Naive thymus-derived CD4-positive, alpha-beta T cell (primary cell): ENCODE measurements at regions of chr17 and their contacts with region 1.

Region 1: DNA sequence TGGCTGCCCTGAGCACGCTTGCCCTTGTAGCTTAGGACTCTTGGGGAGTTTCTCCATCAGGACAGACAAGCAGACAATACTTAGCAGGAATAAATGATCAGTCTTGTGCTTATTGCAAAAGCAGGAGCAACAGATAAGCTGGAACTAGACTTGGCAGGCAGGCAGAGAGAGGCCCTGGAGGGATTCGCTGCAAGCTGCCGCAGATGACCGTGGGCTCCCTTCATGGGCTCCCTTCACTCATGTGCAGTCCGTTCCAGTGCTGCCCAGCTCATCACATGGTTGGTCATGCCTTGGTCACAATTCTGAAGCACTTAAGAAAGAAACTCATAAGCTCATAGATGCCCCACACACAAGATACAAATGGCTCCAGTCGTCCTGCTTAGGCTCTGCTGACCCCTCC is 2.4 kb upstream of the SLC5A10 start:
- DNase-seq: no peak
- ATAC-seq: no peak
- H3K4me3 ChIP-seq: no peak overlapping the region
- H3K4me3 Mint-ChIP-seq: no peak overlapping the region
- H3K27ac ChIP-seq: no peak overlapping the region
- H3K27ac Mint-ChIP-seq: no peak overlapping the region
- H3K4me1 ChIP-seq: peaks cover 6 to 13% of the 10 kb centered on the region in 2 donors
- H3K4me1 Mint-ChIP-seq: peaks cover 9 to 51% (median 22%) of the 10 kb centered on the region in 7 donors
- H3K27me3 ChIP-seq: no peaks in the 10 kb centered on the region
- H3K27me3 Mint-ChIP-seq: peaks cover 0 to 27% (median 0%) of the 10 kb centered on the region in 5 donors

Region 2: DNA sequence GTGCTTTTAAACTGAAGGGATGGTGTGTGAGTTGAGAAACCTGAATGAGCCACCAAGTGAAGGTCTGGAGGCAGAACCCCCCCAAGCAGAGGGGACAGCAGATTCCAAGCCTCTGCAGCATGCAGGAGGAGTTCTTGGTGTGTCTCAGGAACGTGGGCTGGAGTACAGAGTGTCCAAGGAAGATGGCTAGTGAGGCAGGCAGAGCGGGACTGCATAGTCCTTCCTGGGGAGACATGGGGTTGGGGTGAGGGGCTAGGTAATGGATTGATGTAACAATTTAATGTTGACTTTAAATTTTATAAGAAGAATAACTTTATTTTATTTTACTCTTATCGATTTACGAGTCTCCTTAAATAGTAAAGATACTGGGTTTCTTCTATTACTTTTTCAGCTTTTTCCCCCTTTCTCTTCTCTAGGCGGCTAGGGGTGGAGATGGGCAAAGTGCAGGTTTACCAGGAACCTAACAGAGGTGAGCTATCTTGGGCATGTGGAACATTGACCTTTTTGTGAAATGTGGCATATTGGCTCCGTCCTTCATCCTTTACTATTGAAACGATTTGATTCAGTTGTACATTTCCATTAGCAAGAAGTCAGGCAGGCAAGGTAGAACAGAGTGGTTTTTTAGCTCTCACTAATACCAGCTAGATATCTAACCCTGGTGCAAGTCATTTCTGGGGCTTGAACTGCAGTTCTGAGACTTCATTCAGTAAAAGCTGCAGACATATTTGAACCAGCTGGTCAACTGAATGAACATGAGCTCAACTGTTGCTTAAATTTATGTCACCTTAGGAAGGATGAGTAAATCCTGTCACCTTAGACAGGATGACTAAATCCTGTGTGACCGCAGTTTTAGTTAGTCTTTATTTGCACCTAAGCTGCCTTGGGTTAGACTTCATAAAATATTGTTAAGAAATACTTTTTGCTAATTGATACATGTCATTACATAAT is 82.4 kb before region 1 on chr17:
- CTCF ChIA-PET with region 1: no interaction called
- POLR2A ChIA-PET with region 1: no interaction called
- intact Hi-C with region 1: no loop called
- DNase-seq: no peak
- ATAC-seq: no peak
- H3K4me3 ChIP-seq: no peak overlapping the region
- H3K4me3 Mint-ChIP-seq: no peak overlapping the region
- H3K27ac ChIP-seq: no peak overlapping the region
- H3K27ac Mint-ChIP-seq: peak overlapping the region in 2 of 9 donors; percentile 51 to 85
- H3K4me1 ChIP-seq: no peaks in the 10 kb centered on the region
- H3K4me1 Mint-ChIP-seq: peaks cover 5 to 25% (median 18%) of the 10 kb centered on the region in 7 donors
- H3K27me3 ChIP-seq: no peaks in the 10 kb centered on the region
- H3K27me3 Mint-ChIP-seq: no peaks in the 10 kb centered on the region

Region 3: DNA sequence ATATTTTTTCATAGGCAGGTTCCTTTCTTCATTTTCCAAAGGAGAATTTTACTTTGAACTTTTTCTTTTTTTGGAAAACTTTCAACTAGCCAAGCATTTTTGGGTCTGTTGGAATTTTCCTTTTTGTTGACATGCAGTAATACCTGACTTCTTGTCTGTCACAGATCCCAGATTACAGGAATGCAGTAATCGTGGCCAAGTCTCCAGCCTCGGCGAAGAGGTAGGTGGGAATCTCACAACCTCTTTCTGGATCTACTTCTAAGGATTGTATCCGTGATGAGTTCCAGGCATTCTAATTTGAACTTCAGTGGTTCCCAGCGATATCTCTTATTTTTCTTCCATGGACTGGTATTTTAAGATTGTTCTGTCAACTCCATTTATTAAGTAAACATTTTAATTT is 59.9 kb before region 1 on chr17:
- CTCF ChIA-PET with region 1: no interaction called
- POLR2A ChIA-PET with region 1: no interaction called
- intact Hi-C with region 1: no loop called
- DNase-seq: no peak
- ATAC-seq: no peak
- H3K4me3 ChIP-seq: no peak overlapping the region
- H3K4me3 Mint-ChIP-seq: no peak overlapping the region
- H3K27ac ChIP-seq: no peak overlapping the region
- H3K27ac Mint-ChIP-seq: no peak overlapping the region
- H3K4me1 ChIP-seq: no peaks in the 10 kb centered on the region
- H3K4me1 Mint-ChIP-seq: peaks cover 0 to 37% (median 20%) of the 10 kb centered on the region in 7 donors
- H3K27me3 ChIP-seq: no peaks in the 10 kb centered on the region
- H3K27me3 Mint-ChIP-seq: no peaks in the 10 kb centered on the region

Region 4: DNA sequence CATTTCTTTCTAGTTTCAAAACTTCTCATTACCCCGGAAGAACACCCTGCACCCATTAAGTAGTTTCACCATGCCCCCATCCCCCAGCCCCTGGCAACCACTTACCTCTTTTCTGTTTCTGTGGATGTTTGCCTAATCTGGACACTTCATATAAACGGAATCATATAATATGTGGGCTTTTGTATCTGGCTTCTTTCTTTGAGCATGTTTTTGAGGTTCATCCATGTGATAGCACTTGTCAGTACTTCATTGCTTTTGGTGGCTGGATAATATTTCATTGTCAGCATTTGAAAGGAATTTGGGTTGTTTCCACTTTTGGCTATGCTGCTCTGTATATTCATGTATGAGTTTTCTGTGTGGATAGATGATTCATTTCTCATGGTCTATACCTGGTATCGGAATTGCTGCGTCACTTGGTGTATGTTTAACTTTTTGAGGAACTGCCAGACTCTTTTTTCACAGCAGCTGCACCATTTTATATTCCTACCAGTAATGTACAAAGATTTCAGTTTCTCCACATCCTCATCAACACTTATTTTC is 27.6 kb before region 1 on chr17:
- CTCF ChIA-PET with region 1: no interaction called
- POLR2A ChIA-PET with region 1: no interaction called
- intact Hi-C with region 1: loop called in 1 of 2 experiments (anchors 2 kb)
- DNase-seq: no peak
- ATAC-seq: no peak
- H3K4me3 ChIP-seq: no peak overlapping the region
- H3K4me3 Mint-ChIP-seq: peak overlapping the region in 8 of 10 donors; percentile 13 to 63 (median 50)
- H3K27ac ChIP-seq: no peak overlapping the region
- H3K27ac Mint-ChIP-seq: peak overlapping the region; percentile 20 to 70 (median 60)
- H3K4me1 ChIP-seq: peaks cover 9 to 58% of the 10 kb centered on the region in 2 donors
- H3K4me1 Mint-ChIP-seq: peaks cover 34 to 90% (median 74%) of the 10 kb centered on the region in 7 donors
- H3K27me3 ChIP-seq: no peaks in the 10 kb centered on the region
- H3K27me3 Mint-ChIP-seq: no peaks in the 10 kb centered on the region

Region 5: DNA sequence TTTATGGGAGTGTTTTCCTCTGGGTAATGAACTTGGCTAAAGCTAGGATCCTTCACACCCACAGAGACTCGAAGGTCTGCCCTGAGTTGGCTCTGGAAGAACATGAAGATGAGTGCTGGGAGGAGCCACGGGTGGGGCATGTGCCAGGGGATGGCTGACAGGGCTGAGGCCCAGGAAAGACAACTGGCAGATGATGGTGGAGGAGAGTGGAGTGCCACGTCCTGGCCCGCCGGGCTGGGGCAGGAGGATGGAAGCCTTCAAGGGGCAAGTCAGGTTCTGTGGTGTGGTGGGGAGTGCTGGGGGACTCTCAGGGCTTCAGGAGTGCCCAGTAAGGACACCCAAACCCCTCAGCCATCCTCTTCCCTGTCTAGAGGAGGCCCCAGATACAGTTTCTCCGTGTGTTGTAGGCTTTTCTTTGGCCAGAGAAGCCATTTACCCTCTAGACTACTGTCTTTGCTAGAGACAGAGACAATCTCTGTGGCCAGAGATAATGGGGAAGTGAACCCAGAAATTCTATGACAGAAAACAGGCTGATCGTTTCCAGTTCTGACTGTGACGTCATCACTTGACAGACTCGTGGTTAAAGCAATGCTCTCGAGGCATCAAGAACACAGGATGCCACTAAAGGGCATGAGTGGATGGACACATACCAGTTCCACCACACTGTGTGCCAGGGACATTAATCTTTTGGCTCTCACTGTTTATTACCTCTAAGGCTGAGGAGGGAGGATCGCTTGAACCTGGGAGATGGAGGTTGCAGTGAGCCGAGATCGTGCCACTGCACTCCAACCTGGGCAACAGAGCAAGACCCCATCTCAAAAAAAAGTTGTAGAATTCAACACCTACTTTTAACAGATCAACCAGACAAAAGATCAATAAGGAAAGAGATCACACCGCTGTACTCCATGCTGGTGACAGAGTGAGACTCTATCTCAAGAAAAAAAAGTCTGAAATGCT is 16.2 kb before region 1 on chr17:
- CTCF ChIA-PET with region 1: interaction called, 3 read pairs
- POLR2A ChIA-PET with region 1: interaction called, 24 read pairs
- intact Hi-C with region 1: loop called in 1 of 2 experiments (anchors 2 kb)
- DNase-seq: no peak
- ATAC-seq: peak; percentile 48
- H3K4me3 ChIP-seq: no peak overlapping the region
- H3K4me3 Mint-ChIP-seq: peak overlapping the region in 4 of 10 donors; percentile 11 to 42 (median 30)
- H3K27ac ChIP-seq: no peak overlapping the region
- H3K27ac Mint-ChIP-seq: peak overlapping the region in 4 of 9 donors; percentile 14 to 87 (median 79)
- H3K4me1 ChIP-seq: peaks cover 0 to 19% of the 10 kb centered on the region in 2 donors
- H3K4me1 Mint-ChIP-seq: peaks cover 13 to 37% (median 22%) of the 10 kb centered on the region in 7 donors
- H3K27me3 ChIP-seq: no peaks in the 10 kb centered on the region
- H3K27me3 Mint-ChIP-seq: peaks cover 0 to 10% (median 0%) of the 10 kb centered on the region in 5 donors

Region 6: DNA sequence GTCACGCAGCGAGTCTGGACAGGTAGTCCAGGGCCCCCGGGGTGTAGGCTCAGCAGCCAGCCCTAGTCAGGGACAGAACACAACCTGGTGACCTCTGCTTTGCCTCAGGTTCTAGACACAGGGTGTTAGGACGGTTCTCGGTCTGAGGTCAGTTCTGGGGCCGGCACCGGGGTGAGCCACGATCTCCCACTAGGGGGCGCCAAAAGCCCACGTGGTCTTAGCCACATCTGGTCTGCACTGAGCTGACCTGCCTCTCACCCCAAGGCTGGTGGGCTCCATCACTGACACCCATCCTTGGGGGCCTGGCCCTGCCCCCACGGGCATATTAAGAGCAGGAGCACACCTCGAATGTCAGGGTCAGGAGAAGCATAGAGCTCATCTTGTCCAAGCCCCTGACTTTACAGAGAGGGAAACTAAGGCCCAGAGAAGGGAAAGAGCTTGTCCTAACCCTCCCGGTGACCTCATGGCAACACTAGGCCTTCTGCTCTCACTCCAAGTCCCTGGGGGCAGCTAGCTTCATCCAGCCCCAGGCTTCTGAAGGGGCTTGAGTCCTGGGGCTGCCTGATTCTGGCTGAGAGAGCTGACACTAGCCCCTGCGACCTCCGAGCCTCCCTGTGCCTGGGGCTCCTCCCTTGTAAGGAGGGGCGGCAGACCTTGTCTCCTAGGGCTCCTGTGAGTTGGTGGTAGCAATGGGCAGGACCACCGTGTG is 11.4 kb after region 1 on chr17:
- CTCF ChIA-PET with region 1: interaction called, 14 read pairs
- POLR2A ChIA-PET with region 1: interaction called, 4 read pairs
- intact Hi-C with region 1: no loop called
- DNase-seq: peak; percentile 27 to 86 (median 45)
- ATAC-seq: peak; percentile 85
- H3K4me3 ChIP-seq: no peak overlapping the region
- H3K4me3 Mint-ChIP-seq: no peak overlapping the region
- H3K27ac ChIP-seq: no peak overlapping the region
- H3K27ac Mint-ChIP-seq: peak overlapping the region in 5 of 9 donors; percentile 16 to 58 (median 57)
- H3K4me1 ChIP-seq: peaks cover 6 to 12% of the 10 kb centered on the region in 2 donors
- H3K4me1 Mint-ChIP-seq: peaks cover 10 to 45% (median 32%) of the 10 kb centered on the region in 7 donors
- H3K27me3 ChIP-seq: no peaks in the 10 kb centered on the region
- H3K27me3 Mint-ChIP-seq: no peaks in the 10 kb centered on the region

Region 7: DNA sequence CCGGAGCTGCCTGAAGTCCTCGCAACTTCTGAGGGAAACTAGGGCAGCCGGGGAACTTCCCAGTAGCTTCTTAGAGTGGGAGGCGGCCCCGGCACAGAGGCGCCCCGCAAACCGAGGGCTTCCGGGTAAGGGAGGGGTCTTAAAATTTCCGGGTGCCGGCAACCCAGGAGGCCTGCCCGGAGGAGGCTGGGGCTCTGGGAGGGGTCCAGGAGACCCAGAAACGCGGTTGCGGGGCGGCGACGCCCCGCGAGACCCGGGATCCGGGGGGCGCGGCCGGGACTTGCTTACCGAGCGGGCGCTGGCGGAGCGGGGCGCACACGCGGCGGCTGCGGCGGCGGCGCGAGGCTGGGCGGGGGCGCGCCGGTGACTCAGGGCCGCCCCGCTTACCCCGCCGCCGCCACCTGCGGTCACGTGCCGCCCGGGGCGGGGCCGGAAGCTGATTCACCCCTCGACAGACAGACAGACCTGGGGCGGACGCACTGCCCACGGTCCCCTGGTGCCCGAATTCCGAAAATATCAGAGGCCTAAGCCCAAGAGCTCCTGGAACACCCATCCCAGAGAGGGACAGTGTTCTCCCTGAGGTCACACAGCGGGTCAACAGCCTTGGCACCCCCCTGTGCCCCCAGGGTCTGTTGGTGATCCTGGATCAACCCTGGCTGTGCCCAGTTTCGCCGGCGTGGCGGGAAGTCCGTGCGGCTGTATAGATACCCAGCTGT is 55.0 kb after region 1 on chr17 and contains the start of gene FAM83G:
- CTCF ChIA-PET with region 1: no interaction called
- POLR2A ChIA-PET with region 1: no interaction called
- intact Hi-C with region 1: no loop called
- DNase-seq: peak; percentile 67 to 92 (median 71)
- ATAC-seq: peak; percentile 90
- H3K4me3 ChIP-seq: peak within 1 kb of the TSS; percentile 61
- H3K4me3 Mint-ChIP-seq: peak within 1 kb of the TSS; percentile 73 to 94 (median 88)
- H3K27ac ChIP-seq: peak within 1 kb of the TSS; percentile 84
- H3K27ac Mint-ChIP-seq: peak within 1 kb of the TSS; percentile 59 to 94 (median 89)
- H3K4me1 ChIP-seq: peaks cover 18 to 30% of the 10 kb centered on the region in 2 donors
- H3K4me1 Mint-ChIP-seq: peaks cover 15 to 37% (median 25%) of the 10 kb centered on the region in 7 donors
- H3K27me3 ChIP-seq: no peaks in the 10 kb centered on the region
- H3K27me3 Mint-ChIP-seq: peaks cover 0 to 19% (median 0%) of the 10 kb centered on the region in 5 donors
- total RNA-seq, gene FAM83G: 3.9 to 9.1 (median 6.9) TPM

Region 8: GRCh38 chr17:19398301-19399181 is 449.0 kb after region 1 on chr17:
- CTCF ChIA-PET with region 1: no interaction called
- POLR2A ChIA-PET with region 1: no interaction called
- intact Hi-C with region 1: no loop called
- DNase-seq: no peak
- ATAC-seq: peak; percentile 91
- H3K4me3 ChIP-seq: no peak overlapping the region
- H3K4me3 Mint-ChIP-seq: no peak overlapping the region
- H3K27ac ChIP-seq: no peak overlapping the region
- H3K27ac Mint-ChIP-seq: no peak overlapping the region
- H3K4me1 ChIP-seq: no peaks in the 10 kb centered on the region
- H3K4me1 Mint-ChIP-seq: peaks cover 0 to 3% (median 0%) of the 10 kb centered on the region in 7 donors
- H3K27me3 ChIP-seq: no peaks in the 10 kb centered on the region
- H3K27me3 Mint-ChIP-seq: peaks cover 0 to 29% (median 6%) of the 10 kb centered on the region in 5 donors